Activated CD8-positive, alpha-beta T cell treated with anti-CD3 and anti-CD28 coated beads for 36 hours (primary cell): ENCODE measurements at regions of chr10 and their contacts with region 1.

Region 1: DNA sequence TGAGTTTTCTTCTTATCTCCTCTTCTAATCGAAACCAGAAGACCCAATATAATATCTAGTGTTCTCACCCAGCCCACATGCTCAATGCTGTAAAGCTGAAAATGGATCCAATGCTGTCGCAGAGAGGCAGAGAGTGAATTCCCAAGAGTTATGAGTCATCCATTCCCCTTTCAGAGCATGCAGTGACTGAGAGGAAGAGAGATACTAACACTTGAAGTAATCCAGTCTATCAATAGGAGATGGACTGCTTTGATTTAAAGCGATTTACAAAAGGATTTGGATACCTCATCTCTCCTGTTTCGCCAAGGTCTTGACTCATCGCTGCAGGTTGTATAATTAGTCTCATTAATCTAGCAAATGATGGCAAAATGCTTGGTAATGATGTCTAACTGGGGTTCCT is 41.5 kb upstream of the PRKCQ start:
- DNase-seq: no peak
- ATAC-seq: no peak
- H3K4me3 Mint-ChIP-seq: no peak overlapping the region
- H3K27ac Mint-ChIP-seq: no peak overlapping the region
- H3K4me1 Mint-ChIP-seq: peaks cover 29% of the 10 kb centered on the region
- H3K27me3 Mint-ChIP-seq: no peaks in the 10 kb centered on the region
- CTCF ChIP-seq: no peak

Region 2: DNA sequence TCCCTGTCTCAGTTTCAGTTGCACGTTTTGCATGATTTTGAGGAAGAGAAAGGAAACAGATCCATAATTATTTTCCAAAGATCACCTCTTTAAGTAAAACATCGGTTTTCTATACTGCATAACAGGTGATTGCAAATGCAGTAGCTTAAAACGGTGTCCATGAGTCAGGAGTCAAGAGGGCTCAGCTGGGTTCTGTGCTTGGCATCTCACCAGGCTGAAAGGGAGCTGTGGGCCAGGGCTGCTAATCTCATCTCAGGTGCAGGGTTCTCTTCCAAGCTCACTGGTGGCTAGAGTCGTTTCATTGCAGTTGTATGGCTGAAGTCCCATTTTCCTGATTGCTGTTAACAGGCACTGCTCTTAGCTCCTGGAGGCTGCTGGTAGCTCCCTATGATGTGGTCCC is 15.5 kb after region 1 on chr10:
- CTCF ChIA-PET with region 1: interaction called, 10 read pairs
- POLR2A ChIA-PET with region 1: interaction called, 4 read pairs
- intact Hi-C with region 1: no loop called
- DNase-seq: no peak
- ATAC-seq: no peak
- H3K4me3 Mint-ChIP-seq: no peak overlapping the region
- H3K27ac Mint-ChIP-seq: no peak overlapping the region
- H3K4me1 Mint-ChIP-seq: peaks cover 28% of the 10 kb centered on the region
- H3K27me3 Mint-ChIP-seq: no peaks in the 10 kb centered on the region
- CTCF ChIP-seq: no peak